Naive thymus-derived CD4-positive, alpha-beta T cell (primary cell): ENCODE measurements at regions of chr16 and their contacts with region 1.

Region 1: GRCh38 chr16:50806099-50807062 is 64.5 kb downstream of the CYLD start:
- DNase-seq: peak; percentile 66 to 92 (median 89)
- ATAC-seq: peak; percentile 98
- H3K4me3 ChIP-seq: peak overlapping the region; percentile 34
- H3K4me3 Mint-ChIP-seq: peak overlapping the region; percentile 12 to 90 (median 80)
- H3K27ac ChIP-seq: no peak overlapping the region
- H3K27ac Mint-ChIP-seq: peak overlapping the region; percentile 15 to 92 (median 81)
- H3K4me1 ChIP-seq: peaks cover 3 to 5% of the 10 kb centered on the region in 2 donors
- H3K4me1 Mint-ChIP-seq: peaks cover 8 to 19% (median 13%) of the 10 kb centered on the region in 7 donors
- H3K27me3 ChIP-seq: no peaks in the 10 kb centered on the region
- H3K27me3 Mint-ChIP-seq: no peaks in the 10 kb centered on the region

Region 2: DNA sequence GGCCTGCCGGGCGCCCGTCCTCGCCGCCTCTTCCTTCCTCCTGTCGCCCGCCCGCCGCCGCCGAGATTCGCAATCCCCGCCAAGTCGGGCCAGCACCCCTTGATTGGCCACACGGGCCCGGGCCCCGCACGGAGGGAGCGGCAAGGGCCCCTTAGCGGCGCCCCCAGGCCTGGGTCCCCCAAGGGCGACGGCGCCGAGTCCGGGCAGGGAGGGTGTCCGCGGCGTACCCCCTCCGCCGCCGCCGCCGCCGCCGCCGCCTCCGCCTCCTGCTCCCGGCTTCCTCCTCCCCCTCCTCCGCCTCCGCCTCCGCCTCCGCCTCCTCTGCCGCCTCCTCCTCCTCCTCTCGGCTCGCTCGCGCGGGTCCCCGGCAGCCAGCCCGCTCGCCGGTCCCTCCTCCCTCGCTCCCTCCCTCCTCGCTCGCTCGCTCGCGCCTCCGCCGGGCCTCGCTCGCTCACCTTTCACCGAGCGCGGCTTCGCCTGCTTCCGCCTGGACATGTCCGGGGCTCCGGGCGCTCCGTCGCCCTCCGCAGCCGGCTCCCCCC is 951.0 kb before region 1 on chr16:
- CTCF ChIA-PET with region 1: no interaction called
- POLR2A ChIA-PET with region 1: no interaction called
- intact Hi-C with region 1: loop called in 1 of 2 experiments (anchors 10 kb)
- DNase-seq: peak; percentile 25 to 60 (median 58)
- ATAC-seq: peak; percentile 76
- H3K4me3 ChIP-seq: no peak overlapping the region
- H3K4me3 Mint-ChIP-seq: peak overlapping the region in 7 of 10 donors; percentile 16 to 90 (median 41)
- H3K27ac ChIP-seq: no peak overlapping the region
- H3K27ac Mint-ChIP-seq: no peak overlapping the region
- H3K4me1 ChIP-seq: peaks cover 0 to 5% of the 10 kb centered on the region in 2 donors
- H3K4me1 Mint-ChIP-seq: peaks cover 0 to 20% (median 11%) of the 10 kb centered on the region in 7 donors
- H3K27me3 ChIP-seq: peaks cover 0 to 4% of the 10 kb centered on the region in 2 donors
- H3K27me3 Mint-ChIP-seq: peaks cover 28 to 67% (median 45%) of the 10 kb centered on the region in 5 donors

Region 3: DNA sequence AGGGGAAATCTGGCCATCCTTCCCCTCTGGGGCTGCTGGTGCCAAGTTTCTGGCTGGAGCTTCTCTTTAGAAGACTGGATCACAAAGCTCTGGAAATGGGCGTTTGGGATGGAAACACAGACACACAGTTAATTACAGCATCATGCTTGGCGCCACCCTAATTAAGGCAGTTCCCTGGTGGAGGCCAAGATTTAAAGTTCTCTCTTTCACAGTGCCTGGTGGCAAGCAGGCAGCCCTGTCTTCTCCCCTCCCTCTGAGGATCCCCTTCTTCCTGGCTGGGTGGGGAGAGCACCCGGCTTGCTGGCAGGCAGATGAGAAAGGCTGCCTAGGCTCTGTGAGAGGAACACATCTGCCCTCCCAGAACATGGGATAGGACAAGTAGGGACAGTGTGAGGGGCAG is 317.2 kb before region 1 on chr16:
- CTCF ChIA-PET with region 1: no interaction called
- POLR2A ChIA-PET with region 1: no interaction called
- intact Hi-C with region 1: no loop called
- DNase-seq: no peak
- ATAC-seq: no peak
- H3K4me3 ChIP-seq: no peak overlapping the region
- H3K4me3 Mint-ChIP-seq: no peak overlapping the region
- H3K27ac ChIP-seq: no peak overlapping the region
- H3K27ac Mint-ChIP-seq: no peak overlapping the region
- H3K4me1 ChIP-seq: no peaks in the 10 kb centered on the region
- H3K4me1 Mint-ChIP-seq: peaks cover 0 to 4% (median 0%) of the 10 kb centered on the region in 7 donors
- H3K27me3 ChIP-seq: no peaks in the 10 kb centered on the region
- H3K27me3 Mint-ChIP-seq: peaks cover 0 to 25% (median 0%) of the 10 kb centered on the region in 5 donors

Region 4: DNA sequence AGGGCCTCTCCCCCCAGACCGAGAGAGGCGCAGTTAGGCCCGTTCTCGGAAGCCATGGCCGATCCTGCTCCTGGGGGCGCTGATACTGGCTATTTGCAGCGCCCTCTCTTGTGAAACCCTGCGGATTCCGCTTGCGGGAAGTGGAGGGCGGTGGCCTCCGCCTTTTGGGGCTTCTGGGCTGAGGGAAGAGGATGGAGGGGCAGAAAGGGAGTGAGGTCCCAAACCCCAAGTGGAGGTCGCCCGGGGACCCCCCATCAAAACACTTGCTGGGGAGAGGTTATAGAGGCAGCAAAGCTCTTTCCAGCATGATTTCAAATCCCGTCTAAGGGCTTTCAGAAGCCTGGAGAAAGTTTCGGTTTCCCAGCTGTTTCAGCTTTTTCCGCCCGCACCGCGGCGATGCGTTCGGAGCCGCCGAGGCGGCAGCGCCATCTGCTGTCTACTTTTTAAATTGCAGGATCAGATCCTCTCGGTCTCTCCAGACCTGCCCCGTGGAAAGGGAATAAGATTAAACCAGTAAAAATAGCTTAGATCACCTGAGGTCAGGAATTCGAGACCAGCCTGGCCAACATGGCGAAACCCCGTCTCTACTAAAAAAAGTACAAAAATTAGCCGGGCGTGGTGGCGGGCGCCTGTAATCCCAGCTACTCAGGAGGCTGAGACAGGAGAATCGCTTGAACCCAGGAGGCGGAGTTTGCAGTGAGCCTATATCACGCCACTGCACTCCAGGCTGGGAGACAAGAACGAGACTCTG is 141.1 kb before region 1 on chr16:
- CTCF ChIA-PET with region 1: interaction called, 37 read pairs
- POLR2A ChIA-PET with region 1: interaction called, 4 read pairs
- intact Hi-C with region 1: loop called in 1 of 2 experiments (anchors 1 kb)
- DNase-seq: peak; percentile 71 to 90 (median 77)
- ATAC-seq: peak; percentile 80
- H3K4me3 ChIP-seq: peak overlapping the region; percentile 60
- H3K4me3 Mint-ChIP-seq: peak overlapping the region; percentile 73 to 87 (median 84)
- H3K27ac ChIP-seq: peak overlapping the region; percentile 62
- H3K27ac Mint-ChIP-seq: peak overlapping the region; percentile 82 to 97 (median 89)
- H3K4me1 ChIP-seq: peaks cover 17% of the 10 kb centered on the region in 2 donors
- H3K4me1 Mint-ChIP-seq: peaks cover 28 to 49% (median 44%) of the 10 kb centered on the region in 7 donors
- H3K27me3 ChIP-seq: no peaks in the 10 kb centered on the region
- H3K27me3 Mint-ChIP-seq: no peaks in the 10 kb centered on the region

Region 5: DNA sequence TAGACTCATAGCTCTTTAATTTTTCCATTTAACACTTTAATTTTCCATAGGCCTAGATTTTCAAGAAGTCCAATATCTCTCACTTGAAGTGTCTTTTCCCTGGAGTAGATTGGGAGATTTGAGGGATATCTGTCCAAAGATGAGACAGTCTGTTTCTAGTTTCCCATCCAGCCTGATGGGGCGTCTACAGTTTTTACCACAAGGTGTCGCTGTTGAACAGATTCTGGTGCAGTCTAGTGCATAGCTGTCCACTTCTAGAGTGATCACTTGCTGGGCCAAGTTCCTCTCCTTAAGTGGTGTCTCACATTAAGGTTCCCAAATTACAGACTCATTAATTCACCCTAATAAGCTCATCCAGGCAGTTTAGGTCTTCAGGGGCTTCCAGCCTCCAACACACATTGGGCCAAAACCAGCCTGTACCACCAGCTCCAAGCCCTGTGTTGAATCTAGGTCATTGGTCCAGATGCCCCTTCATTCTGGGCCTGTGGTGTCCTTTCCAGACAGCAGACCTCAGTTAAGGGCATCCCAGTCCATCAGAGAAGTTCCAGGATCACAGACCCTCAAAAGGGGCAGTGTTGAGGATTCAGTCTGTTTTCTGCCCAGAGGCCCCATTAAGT is 134.6 kb before region 1 on chr16:
- CTCF ChIA-PET with region 1: interaction called, 37 read pairs
- POLR2A ChIA-PET with region 1: interaction called, 4 read pairs
- intact Hi-C with region 1: loop called in 1 of 2 experiments (anchors 1 kb)
- DNase-seq: peak in 7 of 9 donors; percentile 31 to 60 (median 48)
- ATAC-seq: peak; percentile 52
- H3K4me3 ChIP-seq: no peak overlapping the region
- H3K4me3 Mint-ChIP-seq: peak overlapping the region in 2 of 10 donors; percentile 3 to 19
- H3K27ac ChIP-seq: no peak overlapping the region
- H3K27ac Mint-ChIP-seq: peak overlapping the region in 8 of 9 donors; percentile 34 to 87 (median 84)
- H3K4me1 ChIP-seq: peaks cover 4 to 10% of the 10 kb centered on the region in 2 donors
- H3K4me1 Mint-ChIP-seq: peaks cover 24 to 44% (median 37%) of the 10 kb centered on the region in 7 donors
- H3K27me3 ChIP-seq: no peaks in the 10 kb centered on the region
- H3K27me3 Mint-ChIP-seq: no peaks in the 10 kb centered on the region

Region 6: DNA sequence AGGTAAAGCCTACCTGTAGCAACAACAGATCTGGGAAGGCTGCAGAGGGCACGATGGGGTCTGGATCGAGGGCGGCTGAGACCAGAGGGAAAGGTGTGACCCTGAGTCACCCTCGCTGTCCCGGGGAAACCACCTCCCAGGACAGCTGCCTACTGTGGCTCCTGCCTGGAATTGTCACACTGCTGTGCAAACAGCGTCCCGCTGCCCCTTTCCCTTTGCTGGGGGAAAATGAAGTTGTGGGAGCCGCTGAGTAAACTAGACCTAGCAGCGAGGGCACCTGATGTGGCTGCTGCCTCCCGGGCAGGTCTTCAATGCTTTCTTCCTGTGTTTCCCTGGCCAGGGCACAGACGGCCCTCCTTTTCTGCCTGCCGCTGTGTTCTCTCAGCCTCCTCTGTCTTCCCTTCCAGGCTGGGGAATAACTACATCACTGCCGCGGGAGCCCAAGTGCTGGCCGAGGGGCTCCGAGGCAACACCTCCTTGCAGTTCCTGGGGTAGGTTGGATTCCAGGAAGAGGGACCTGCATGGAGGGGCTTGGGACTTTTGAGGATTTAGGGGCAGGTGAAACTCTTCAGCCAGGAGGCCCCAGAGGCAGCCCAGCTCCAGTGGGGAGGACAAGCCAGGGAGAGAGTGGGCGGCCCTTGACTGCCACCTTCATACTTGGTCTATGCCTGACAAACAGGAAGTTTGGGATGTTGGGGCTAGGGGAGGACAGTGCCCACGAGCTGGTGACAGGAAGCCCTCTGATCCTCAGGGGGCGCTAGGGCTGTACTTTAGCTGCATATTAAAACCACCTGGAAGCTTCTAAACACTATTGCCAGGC is 86.7 kb before region 1 on chr16:
- CTCF ChIA-PET with region 1: interaction called, 24 read pairs
- POLR2A ChIA-PET with region 1: interaction called, 4 read pairs
- intact Hi-C with region 1: loop called in 1 of 2 experiments (anchors 1 kb)
- DNase-seq: peak in 3 of 9 donors; percentile 31 to 40 (median 35)
- ATAC-seq: peak; percentile 38
- H3K4me3 ChIP-seq: no peak overlapping the region
- H3K4me3 Mint-ChIP-seq: peak overlapping the region in 4 of 10 donors; percentile 18 to 71 (median 41)
- H3K27ac ChIP-seq: no peak overlapping the region
- H3K27ac Mint-ChIP-seq: peak overlapping the region in 6 of 9 donors; percentile 41 to 71 (median 54)
- H3K4me1 ChIP-seq: peaks cover 16 to 22% of the 10 kb centered on the region in 2 donors
- H3K4me1 Mint-ChIP-seq: peaks cover 34 to 54% (median 42%) of the 10 kb centered on the region in 7 donors
- H3K27me3 ChIP-seq: no peaks in the 10 kb centered on the region
- H3K27me3 Mint-ChIP-seq: no peaks in the 10 kb centered on the region

Region 7: DNA sequence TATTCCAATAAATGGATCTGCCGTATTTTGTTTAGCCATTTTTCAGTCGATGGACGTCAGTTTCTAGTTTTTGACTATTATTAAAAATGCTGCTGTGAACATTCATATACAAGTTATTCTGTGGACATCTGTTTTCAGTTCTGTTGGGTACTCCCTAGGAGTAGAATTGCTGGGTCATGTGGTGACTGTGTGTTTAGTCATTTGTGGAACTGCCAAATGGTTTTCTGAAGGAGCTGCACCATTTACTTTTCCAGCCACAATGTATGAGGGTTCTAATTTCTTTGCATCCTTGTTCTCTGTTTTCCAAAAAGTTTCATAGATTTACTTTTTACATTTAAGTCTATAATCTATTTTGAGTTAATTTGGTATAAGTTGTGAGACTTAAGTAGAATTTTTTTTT is 35.0 kb before region 1 on chr16:
- CTCF ChIA-PET with region 1: interaction called, 12 read pairs
- POLR2A ChIA-PET with region 1: interaction called, 4 read pairs
- intact Hi-C with region 1: no loop called
- DNase-seq: no peak
- ATAC-seq: no peak
- H3K4me3 ChIP-seq: no peak overlapping the region
- H3K4me3 Mint-ChIP-seq: peak overlapping the region in 6 of 10 donors; percentile 21 to 65 (median 38)
- H3K27ac ChIP-seq: no peak overlapping the region
- H3K27ac Mint-ChIP-seq: peak overlapping the region in 1 of 9 donors; percentile 34
- H3K4me1 ChIP-seq: peaks cover 25 to 26% of the 10 kb centered on the region in 2 donors
- H3K4me1 Mint-ChIP-seq: peaks cover 54 to 99% (median 94%) of the 10 kb centered on the region in 7 donors
- H3K27me3 ChIP-seq: no peaks in the 10 kb centered on the region
- H3K27me3 Mint-ChIP-seq: no peaks in the 10 kb centered on the region

Region 8: GRCh38 chr16:50781043-50781442 is 25.3 kb before region 1 on chr16:
- CTCF ChIA-PET with region 1: interaction called, 12 read pairs
- POLR2A ChIA-PET with region 1: interaction called, 5 read pairs
- intact Hi-C with region 1: loop called in 1 of 2 experiments (anchors 2 kb)
- DNase-seq: peak in 3 of 9 donors; percentile 10 to 31 (median 26)
- ATAC-seq: peak; percentile 77
- H3K4me3 ChIP-seq: no peak overlapping the region
- H3K4me3 Mint-ChIP-seq: peak overlapping the region in 9 of 10 donors; percentile 37 to 73 (median 51)
- H3K27ac ChIP-seq: no peak overlapping the region
- H3K27ac Mint-ChIP-seq: peak overlapping the region; percentile 63 to 94 (median 88)
- H3K4me1 ChIP-seq: peaks cover 5 to 29% of the 10 kb centered on the region in 2 donors
- H3K4me1 Mint-ChIP-seq: peaks cover 21 to 71% (median 65%) of the 10 kb centered on the region in 7 donors
- H3K27me3 ChIP-seq: no peaks in the 10 kb centered on the region
- H3K27me3 Mint-ChIP-seq: no peaks in the 10 kb centered on the region

Region 9: GRCh38 chr16:51464996-51465395 is 658.6 kb after region 1 on chr16:
- CTCF ChIA-PET with region 1: no interaction called
- POLR2A ChIA-PET with region 1: no interaction called
- intact Hi-C with region 1: no loop called
- DNase-seq: no peak
- ATAC-seq: no peak
- H3K4me3 ChIP-seq: no peak overlapping the region
- H3K4me3 Mint-ChIP-seq: no peak overlapping the region
- H3K27ac ChIP-seq: no peak overlapping the region
- H3K27ac Mint-ChIP-seq: no peak overlapping the region
- H3K4me1 ChIP-seq: no peaks in the 10 kb centered on the region
- H3K4me1 Mint-ChIP-seq: no peaks in the 10 kb centered on the region
- H3K27me3 ChIP-seq: no peaks in the 10 kb centered on the region
- H3K27me3 Mint-ChIP-seq: peaks cover 0 to 4% (median 0%) of the 10 kb centered on the region in 5 donors

Region 10: DNA sequence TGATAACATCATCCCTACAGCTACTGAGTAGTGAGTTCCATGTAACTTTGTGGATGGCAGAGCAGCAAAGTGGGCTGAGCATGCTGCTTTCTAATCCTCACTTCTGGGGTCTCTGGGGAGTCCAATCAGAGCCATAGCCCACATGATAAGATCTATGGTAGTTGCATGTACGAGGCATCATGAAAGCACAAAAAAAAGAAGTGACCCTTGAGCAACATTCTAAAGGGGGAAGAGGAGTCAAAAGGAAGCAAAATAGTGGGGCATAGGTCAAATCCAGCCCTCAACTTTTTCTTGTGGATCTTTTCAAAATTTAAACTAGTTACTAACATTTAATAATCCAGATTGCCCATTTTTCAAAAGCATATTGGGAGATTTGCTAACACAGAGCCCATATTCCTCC is 1949.0 kb after region 1 on chr16:
- CTCF ChIA-PET with region 1: no interaction called
- POLR2A ChIA-PET with region 1: no interaction called
- intact Hi-C with region 1: no loop called
- DNase-seq: no peak
- ATAC-seq: peak; percentile 4
- H3K4me3 ChIP-seq: no peak overlapping the region
- H3K4me3 Mint-ChIP-seq: no peak overlapping the region
- H3K27ac ChIP-seq: no peak overlapping the region
- H3K27ac Mint-ChIP-seq: no peak overlapping the region
- H3K4me1 ChIP-seq: no peaks in the 10 kb centered on the region
- H3K4me1 Mint-ChIP-seq: no peaks in the 10 kb centered on the region
- H3K27me3 ChIP-seq: no peaks in the 10 kb centered on the region
- H3K27me3 Mint-ChIP-seq: no peaks in the 10 kb centered on the region